CD4-positive, alpha-beta memory T cell (primary cell): ENCODE measurements at regions of chr2 and their contacts with region 1.

Region 1: GRCh38 chr2:218395797-218396687 is 3.6 kb upstream of the CTDSP1 start:
- DNase-seq: peak; percentile 95 to 98 (median 96)
- H3K4me3 ChIP-seq: peak overlapping the region; percentile 97 to 98
- H3K4me3 Mint-ChIP-seq: peak overlapping the region; percentile 88 to 95 (median 93)
- H3K27ac ChIP-seq: peak overlapping the region; percentile 89
- H3K27ac Mint-ChIP-seq: peak overlapping the region; percentile 99 to 100 (median 99)
- H3K4me1 ChIP-seq: peaks cover 49% of the 10 kb centered on the region
- H3K4me1 Mint-ChIP-seq: peaks cover 15 to 51% (median 36%) of the 10 kb centered on the region in 4 donors
- H3K27me3 ChIP-seq: no peaks in the 10 kb centered on the region
- H3K27me3 Mint-ChIP-seq: no peaks in the 10 kb centered on the region

Region 2: GRCh38 chr2:218292048-218293014 is 103.7 kb before region 1 on chr2 and contains the start of gene TMBIM1:
- CTCF ChIA-PET with region 1: interaction called, 36 read pairs
- POLR2A ChIA-PET with region 1: interaction called, 139 read pairs
- intact Hi-C with region 1: loop called (anchors 1 kb)
- DNase-seq: peak; percentile 73 to 86 (median 83)
- H3K4me3 ChIP-seq: peak within 1 kb of the TSS; percentile 74 to 78
- H3K4me3 Mint-ChIP-seq: peak within 1 kb of the TSS; percentile 90 to 97 (median 96)
- H3K27ac ChIP-seq: peak within 1 kb of the TSS; percentile 94
- H3K27ac Mint-ChIP-seq: peak within 1 kb of the TSS; percentile 98 to 100 (median 99)
- H3K4me1 ChIP-seq: peaks cover 56% of the 10 kb centered on the region
- H3K4me1 Mint-ChIP-seq: peaks cover 32 to 75% (median 51%) of the 10 kb centered on the region in 4 donors
- H3K27me3 ChIP-seq: no peaks in the 10 kb centered on the region
- H3K27me3 Mint-ChIP-seq: no peaks in the 10 kb centered on the region
- total RNA-seq, gene TMBIM1: 140 to 144 TPM

Region 3: DNA sequence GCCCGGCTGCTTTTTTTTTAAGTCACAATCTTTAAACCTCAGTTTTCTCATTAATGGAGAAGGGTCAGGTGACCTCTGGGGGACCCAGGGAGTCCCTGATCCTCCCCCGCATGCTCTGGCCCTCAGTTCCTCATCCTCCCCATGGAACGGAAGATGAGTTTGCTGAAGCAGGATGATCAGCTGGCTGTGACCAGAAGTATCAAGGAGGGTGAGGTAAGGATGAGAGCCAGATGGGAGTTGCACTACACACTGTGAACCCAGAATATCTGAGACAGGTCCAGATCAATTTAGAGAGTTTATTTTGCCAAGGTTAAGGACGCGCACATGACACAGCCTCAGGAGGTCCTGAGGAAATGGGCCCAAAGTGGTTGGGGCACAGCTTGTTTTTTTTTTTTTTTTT is 35.6 kb before region 1 on chr2:
- CTCF ChIA-PET with region 1: interaction called, 16 read pairs
- POLR2A ChIA-PET with region 1: interaction called, 7 read pairs
- intact Hi-C with region 1: loop called (anchors 1 kb)
- DNase-seq: no peak
- H3K4me3 ChIP-seq: no peak overlapping the region
- H3K4me3 Mint-ChIP-seq: no peak overlapping the region
- H3K27ac ChIP-seq: no peak overlapping the region
- H3K27ac Mint-ChIP-seq: no peak overlapping the region
- H3K4me1 ChIP-seq: peaks cover 6% of the 10 kb centered on the region
- H3K4me1 Mint-ChIP-seq: peaks cover 0 to 4% (median 2%) of the 10 kb centered on the region in 4 donors
- H3K27me3 ChIP-seq: no peaks in the 10 kb centered on the region
- H3K27me3 Mint-ChIP-seq: no peaks in the 10 kb centered on the region

Region 4: DNA sequence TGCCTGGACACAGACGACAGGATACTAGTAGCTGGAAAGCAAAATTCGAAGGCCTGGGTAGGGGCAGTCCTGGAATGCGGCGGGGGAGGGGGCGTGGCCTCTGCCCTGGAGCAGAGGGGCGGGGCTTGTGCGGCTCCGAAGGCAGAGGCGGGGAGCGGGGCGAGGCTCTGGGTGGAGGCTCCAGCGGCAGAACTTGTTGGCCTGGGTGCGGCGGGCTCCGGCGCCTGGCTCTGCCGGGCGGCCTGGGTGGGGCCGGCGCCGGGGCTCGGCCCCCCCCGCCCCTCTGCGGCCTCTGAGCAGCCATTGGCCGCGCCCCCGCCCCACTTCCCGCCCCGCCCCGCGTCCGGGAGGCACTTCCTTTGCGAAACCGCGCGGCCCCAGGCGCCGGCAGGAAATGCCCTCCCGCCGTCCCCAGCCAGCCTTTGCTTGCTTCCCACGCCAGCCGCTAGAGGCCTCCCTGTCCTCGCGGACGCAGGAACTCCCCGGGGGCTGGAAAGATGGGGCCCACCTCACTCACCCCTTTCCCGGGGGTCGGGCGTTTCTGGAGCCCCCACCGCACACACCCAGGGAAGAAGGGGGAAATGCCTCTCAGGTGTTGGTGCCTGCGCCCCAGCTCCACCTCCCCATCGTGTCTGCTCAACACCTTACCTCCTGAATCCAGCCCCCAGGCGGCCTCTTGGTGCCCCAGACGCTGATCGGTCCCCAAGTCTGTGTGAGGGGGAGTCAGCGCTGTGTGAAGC is 10.3 kb after region 1 on chr2:
- CTCF ChIA-PET with region 1: interaction called, 18 read pairs
- POLR2A ChIA-PET with region 1: interaction called, 109 read pairs
- intact Hi-C with region 1: loop called (anchors 1 kb)
- DNase-seq: peak; percentile 88 to 92 (median 91)
- H3K4me3 ChIP-seq: peak overlapping the region; percentile 34 to 63
- H3K4me3 Mint-ChIP-seq: peak overlapping the region; percentile 80 to 91 (median 87)
- H3K27ac ChIP-seq: peak overlapping the region; percentile 71
- H3K27ac Mint-ChIP-seq: peak overlapping the region; percentile 93 to 100 (median 96)
- H3K4me1 ChIP-seq: peaks cover 62% of the 10 kb centered on the region
- H3K4me1 Mint-ChIP-seq: peaks cover 32 to 67% (median 50%) of the 10 kb centered on the region in 4 donors
- H3K27me3 ChIP-seq: no peaks in the 10 kb centered on the region
- H3K27me3 Mint-ChIP-seq: no peaks in the 10 kb centered on the region

Region 5: GRCh38 chr2:218659258-218659987 is 263.4 kb after region 1 on chr2 and contains the starts of genes BCS1L and ZNF142:
- CTCF ChIA-PET with region 1: interaction called, 3 read pairs
- POLR2A ChIA-PET with region 1: interaction called, 13 read pairs
- intact Hi-C with region 1: loop called (anchors 2 kb)
- DNase-seq: peak; percentile 90 to 94 (median 92)
- H3K4me3 ChIP-seq: peak within 1 kb of the TSS; percentile 50 to 78
- H3K4me3 Mint-ChIP-seq: peak within 1 kb of the TSS; percentile 91 to 100 (median 93)
- H3K27ac ChIP-seq: peak within 1 kb of the TSS; percentile 71
- H3K27ac Mint-ChIP-seq: peak within 1 kb of the TSS; percentile 92 to 98 (median 94)
- H3K4me1 ChIP-seq: peaks cover 28% of the 10 kb centered on the region
- H3K4me1 Mint-ChIP-seq: peaks cover 17 to 37% (median 31%) of the 10 kb centered on the region in 4 donors
- H3K27me3 ChIP-seq: no peaks in the 10 kb centered on the region
- H3K27me3 Mint-ChIP-seq: no peaks in the 10 kb centered on the region
- total RNA-seq, gene BCS1L: 53.0 to 57.2 TPM
- total RNA-seq, gene ZNF142: 44.4 to 54.5 TPM

Region 6: GRCh38 chr2:219177552-219178376 is 781.7 kb after region 1 on chr2 and contains the start of gene RETREG2:
- CTCF ChIA-PET with region 1: no interaction called
- POLR2A ChIA-PET with region 1: interaction called, 3 read pairs
- intact Hi-C with region 1: loop called (anchors 5 kb)
- DNase-seq: peak; percentile 88 to 91 (median 88)
- H3K4me3 ChIP-seq: peak within 1 kb of the TSS; percentile 81 to 96
- H3K4me3 Mint-ChIP-seq: peak within 1 kb of the TSS; percentile 91 to 98 (median 95)
- H3K27ac ChIP-seq: peak within 1 kb of the TSS; percentile 91
- H3K27ac Mint-ChIP-seq: peak within 1 kb of the TSS; percentile 96 to 99 (median 98)
- H3K4me1 ChIP-seq: peaks cover 66% of the 10 kb centered on the region
- H3K4me1 Mint-ChIP-seq: peaks cover 34 to 79% (median 62%) of the 10 kb centered on the region in 4 donors
- H3K27me3 ChIP-seq: no peaks in the 10 kb centered on the region
- H3K27me3 Mint-ChIP-seq: no peaks in the 10 kb centered on the region
- total RNA-seq, gene RETREG2: 123 to 128 TPM